A673 (cell line): ENCODE measurements at regions of chr17 and their contacts with region 1.

Region 1: GRCh38 chr17:28937044-28937729 is 14.1 kb downstream of the PHF12 start:
- DNase-seq: no peak
- H3K4me3 ChIP-seq: no peak overlapping the region
- H3K27ac ChIP-seq: peak overlapping the region; percentile 33
- H3K4me1 ChIP-seq: peaks cover 51% of the 10 kb centered on the region
- H3K27me3 ChIP-seq: no peaks in the 10 kb centered on the region
- CTCF ChIP-seq: no peak

Region 2: GRCh38 chr17:29225396-29225795 is 288.2 kb after region 1 on chr17:
- CTCF ChIA-PET with region 1: no interaction called
- POLR2A ChIA-PET with region 1: interaction called, 18 read pairs
- intact Hi-C with region 1: no loop called
- DNase-seq: no peak
- H3K4me3 ChIP-seq: no peak overlapping the region
- H3K27ac ChIP-seq: no peak overlapping the region
- H3K4me1 ChIP-seq: no peaks in the 10 kb centered on the region
- H3K27me3 ChIP-seq: no peaks in the 10 kb centered on the region
- CTCF ChIP-seq: no peak